ENCODE measurements at regions of chr14 and their contacts with region 1.

Region 1: DNA sequence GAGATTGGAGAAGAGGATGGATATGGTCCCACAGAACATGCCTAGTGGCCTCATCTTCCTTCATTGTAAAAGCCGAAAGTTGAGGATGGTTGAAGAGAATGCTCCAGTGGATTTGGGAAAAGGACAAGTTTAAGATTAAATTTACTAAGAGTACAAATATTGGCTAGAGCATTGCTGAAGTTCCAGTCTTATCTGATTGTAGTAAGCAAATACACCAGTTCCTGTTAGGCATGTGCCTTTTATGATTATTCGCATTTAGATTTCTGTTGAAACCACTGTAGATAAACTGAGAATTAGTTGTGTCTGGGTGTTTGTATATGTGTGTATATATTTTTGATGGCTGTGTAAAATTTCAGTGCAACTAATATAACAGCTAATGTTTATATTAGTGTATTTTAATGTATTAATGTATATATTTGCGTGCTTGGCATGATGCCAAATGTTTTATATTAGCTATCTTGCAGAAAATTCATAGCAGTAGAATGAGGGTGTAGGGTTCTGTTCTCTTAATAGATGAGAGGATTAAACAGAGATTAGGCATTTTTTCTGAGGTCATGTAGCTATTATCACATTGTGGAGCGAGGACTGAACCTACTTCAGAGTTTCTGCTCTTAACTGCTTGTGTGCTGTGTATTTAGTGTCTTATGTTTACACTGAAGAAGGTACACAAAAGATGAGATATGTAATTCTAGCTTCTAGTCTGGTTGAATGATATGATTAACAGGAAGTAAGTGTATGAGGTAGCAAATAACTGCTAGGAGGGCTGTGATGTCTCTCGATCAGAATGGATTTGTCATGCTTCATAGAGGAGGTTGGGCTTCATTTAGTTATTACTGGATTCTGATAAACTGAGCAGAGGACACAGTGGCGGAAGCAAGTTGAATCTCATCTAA is 21.1 kb downstream of the FKBP3 start:
- DNase-seq: peak in 2 of 3 donors; percentile 40 to 62
- H3K4me3 ChIP-seq: no peak overlapping the region
- H3K27ac ChIP-seq: no peak overlapping the region
- H3K4me1 ChIP-seq: peaks cover 0 to 8% (median 1%) of the 10 kb centered on the region in 4 experiments
- H3K27me3 ChIP-seq: no peaks in the 10 kb centered on the region

Region 2: DNA sequence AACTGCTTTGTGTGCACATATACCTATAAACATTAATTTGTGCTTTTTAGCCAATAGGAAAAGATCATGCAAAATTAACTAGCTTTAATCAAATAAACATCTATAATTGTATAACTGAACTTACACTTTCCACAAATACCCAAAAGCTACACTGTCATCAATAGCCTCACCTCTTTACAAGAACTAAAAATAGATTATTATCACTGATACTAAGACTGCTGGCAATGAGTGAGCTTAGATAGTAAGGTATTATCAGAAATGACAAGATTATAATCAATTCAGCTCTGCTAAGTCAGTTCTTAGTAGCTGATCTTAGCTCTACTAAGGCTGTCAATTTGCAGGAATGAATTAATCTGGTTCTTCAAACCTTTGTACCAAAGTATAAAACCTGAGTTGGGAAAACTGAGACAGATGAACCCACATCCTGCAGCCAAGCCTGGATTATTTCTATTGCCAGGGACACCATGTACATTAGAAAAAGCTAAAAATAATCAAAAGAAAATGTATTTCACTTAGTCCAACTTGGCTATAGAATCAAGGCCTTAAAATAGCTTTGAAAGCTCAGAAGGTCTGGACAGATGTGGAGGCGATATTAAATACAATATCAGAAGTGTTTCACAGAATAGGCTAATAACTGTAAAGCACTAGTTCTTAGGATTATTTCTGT is 16.0 kb after region 1 on chr14:
- CTCF ChIA-PET with region 1: interaction called, 10 read pairs
- POLR2A ChIA-PET with region 1: no interaction called
- DNase-seq: no peak
- H3K4me3 ChIP-seq: no peak overlapping the region
- H3K27ac ChIP-seq: peak overlapping the region in 1 of 2 experiments; percentile 34
- H3K4me1 ChIP-seq: peaks cover 3 to 24% (median 6%) of the 10 kb centered on the region in 4 experiments
- H3K27me3 ChIP-seq: no peaks in the 10 kb centered on the region

Region 3: GRCh38 chr14:45177076-45177475 is 63.9 kb after region 1 on chr14:
- CTCF ChIA-PET with region 1: no interaction called
- POLR2A ChIA-PET with region 1: no interaction called
- DNase-seq: peak in 2 of 3 donors; percentile 1 to 2
- H3K4me3 ChIP-seq: no peak overlapping the region
- H3K27ac ChIP-seq: no peak overlapping the region
- H3K4me1 ChIP-seq: no peaks in the 10 kb centered on the region
- H3K27me3 ChIP-seq: no peaks in the 10 kb centered on the region